ENCODE measurements at regions of chr17 and their contacts with region 1.

Region 1: GRCh38 chr17:74961657-74962490 is 10.7 kb downstream of the HID1 start:
- DNase-seq: peak; percentile 95
- ATAC-seq: peak; percentile 89

Region 2: GRCh38 chr17:74864866-74865395 is 96.9 kb before region 1 on chr17:
- intact Hi-C with region 1: no loop called
- DNase-seq: peak; percentile 90
- ATAC-seq: peak; percentile 78

Region 3: GRCh38 chr17:75012346-75013091 is 50.6 kb after region 1 on chr17 and contains the start of gene MRPL58:
- intact Hi-C with region 1: loop called (anchors 10 kb)
- DNase-seq: peak; percentile 88
- ATAC-seq: peak; percentile 96
- total RNA-seq, gene MRPL58: 20.1 TPM